ENCODE measurements at regions of chr4 and their contacts with region 1.

Region 1: DNA sequence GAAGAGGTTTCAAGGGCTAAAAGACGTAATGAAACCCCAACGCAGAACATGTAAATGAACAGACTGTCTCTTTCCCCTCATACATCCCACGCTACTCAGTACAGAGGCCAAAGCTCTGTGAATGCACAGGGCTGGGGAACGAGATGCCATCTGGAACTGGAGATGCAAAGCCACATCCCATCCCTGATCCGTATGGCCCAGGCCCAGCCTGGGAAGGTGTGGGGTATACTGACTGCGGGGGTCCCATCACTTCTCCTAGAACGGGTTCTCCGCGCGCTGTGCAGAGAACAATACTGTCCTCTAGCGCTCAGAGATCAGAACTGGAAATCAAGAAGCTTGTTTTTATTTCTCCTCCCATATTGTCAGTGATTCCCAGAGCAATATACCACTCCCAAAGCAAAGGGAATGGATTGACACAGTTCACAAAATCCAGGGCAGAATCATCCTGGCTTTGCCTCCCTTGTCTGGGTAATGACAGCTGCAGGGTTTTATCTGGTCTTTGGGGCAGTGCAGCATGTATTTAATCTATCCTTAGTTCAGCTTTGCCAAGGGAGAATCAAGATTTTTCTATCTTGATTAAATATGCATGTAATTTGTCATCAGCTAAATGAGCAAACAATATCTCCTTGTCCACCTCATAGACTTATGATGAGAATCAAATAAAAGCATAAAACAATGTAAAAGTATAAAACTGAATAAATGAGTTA is 47.3 kb upstream of the TLR3 start:
- DNase-seq: peak; percentile 44
- ATAC-seq: peak; percentile 55
- H3K4me3 ChIP-seq: no peak overlapping the region
- H3K27ac ChIP-seq: no peak overlapping the region
- H3K4me1 ChIP-seq: no peaks in the 10 kb centered on the region
- H3K27me3 ChIP-seq: no peaks in the 10 kb centered on the region
- CTCF ChIP-seq: peak; percentile 80

Region 2: DNA sequence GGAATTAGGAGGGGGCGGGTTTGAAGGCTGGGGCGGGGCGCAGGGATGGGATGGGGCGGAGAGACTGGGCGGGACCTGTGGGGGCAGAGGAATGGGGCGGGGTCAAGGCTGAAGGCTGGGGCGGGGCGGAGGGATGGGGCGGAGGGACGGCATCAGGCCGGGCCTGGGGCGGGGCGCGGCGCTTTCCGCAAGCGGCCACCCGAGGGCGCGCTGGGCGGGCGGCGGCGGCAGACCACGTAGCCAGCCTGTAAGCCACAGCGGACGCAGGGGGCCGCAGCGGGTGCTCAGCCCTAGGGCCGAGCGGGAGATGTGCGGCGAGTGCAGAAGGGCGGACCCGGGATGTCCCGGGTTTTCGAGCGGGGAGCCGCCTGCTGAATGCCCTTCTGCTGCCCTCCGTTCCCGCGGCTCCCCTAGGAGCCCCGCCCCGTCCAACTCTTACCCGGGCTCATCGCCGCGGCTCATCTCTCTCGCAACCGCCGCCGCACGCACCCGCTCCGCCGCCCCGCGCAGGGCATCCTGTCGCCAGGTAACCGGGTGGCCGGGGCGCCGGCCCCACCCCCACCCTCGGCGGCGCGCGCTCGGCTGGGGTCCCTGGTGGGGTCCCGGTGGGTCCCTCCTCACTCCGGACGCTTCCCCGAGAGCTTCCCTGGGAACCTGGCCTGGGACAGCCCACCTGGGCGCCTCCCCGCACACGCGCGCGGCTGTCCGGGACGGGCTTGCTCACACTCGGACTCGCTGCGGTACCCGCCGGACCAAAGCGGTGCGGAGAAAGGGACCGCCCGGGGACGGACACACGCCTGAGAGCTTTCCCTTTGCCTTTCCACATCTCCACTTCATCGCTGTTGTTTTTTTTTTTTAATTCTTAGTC is 550.1 kb before region 1 on chr4 and contains the start of gene CCDC110:
- CTCF ChIA-PET with region 1: no interaction called
- POLR2A ChIA-PET with region 1: no interaction called
- intact Hi-C with region 1: no loop called
- DNase-seq: peak; percentile 76
- ATAC-seq: peak; percentile 92
- H3K4me3 ChIP-seq: peak within 1 kb of the TSS; percentile 91
- H3K27ac ChIP-seq: no peak within 1 kb of the TSS
- H3K4me1 ChIP-seq: peaks cover 5% of the 10 kb centered on the region; the same call in 1 of the 2 replicates
- H3K27me3 ChIP-seq: no peaks in the 10 kb centered on the region
- CTCF ChIP-seq: peak; percentile 42; the same call in 1 of the 2 replicates
- total RNA-seq, gene CCDC110: 0.62 TPM in 1 of 2 replicates, not detected in the other

Region 3: DNA sequence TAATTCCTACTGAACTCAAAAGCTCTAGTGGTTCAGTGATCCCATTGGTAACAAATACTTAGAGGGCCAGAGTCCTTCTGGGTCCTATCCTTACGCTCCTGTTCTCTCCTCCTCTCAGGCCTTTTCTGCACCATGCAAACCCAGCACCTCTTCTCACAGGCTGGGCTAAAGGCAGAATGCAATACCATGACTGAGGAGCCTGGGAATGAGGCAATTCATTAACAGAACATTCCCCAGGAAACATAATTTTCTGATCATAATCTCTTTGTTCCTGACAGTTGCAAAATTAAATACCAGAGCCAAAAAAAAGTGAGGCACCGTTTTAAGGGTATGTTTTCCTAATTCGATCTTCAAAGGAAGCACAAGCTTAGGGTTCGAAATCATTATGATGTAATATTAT is 218.6 kb before region 1 on chr4:
- CTCF ChIA-PET with region 1: no interaction called
- POLR2A ChIA-PET with region 1: no interaction called
- intact Hi-C with region 1: no loop called
- DNase-seq: no peak
- ATAC-seq: no peak
- H3K4me3 ChIP-seq: no peak overlapping the region
- H3K27ac ChIP-seq: no peak overlapping the region
- H3K4me1 ChIP-seq: no peaks in the 10 kb centered on the region
- H3K27me3 ChIP-seq: no peaks in the 10 kb centered on the region
- CTCF ChIP-seq: no peak

Region 4: DNA sequence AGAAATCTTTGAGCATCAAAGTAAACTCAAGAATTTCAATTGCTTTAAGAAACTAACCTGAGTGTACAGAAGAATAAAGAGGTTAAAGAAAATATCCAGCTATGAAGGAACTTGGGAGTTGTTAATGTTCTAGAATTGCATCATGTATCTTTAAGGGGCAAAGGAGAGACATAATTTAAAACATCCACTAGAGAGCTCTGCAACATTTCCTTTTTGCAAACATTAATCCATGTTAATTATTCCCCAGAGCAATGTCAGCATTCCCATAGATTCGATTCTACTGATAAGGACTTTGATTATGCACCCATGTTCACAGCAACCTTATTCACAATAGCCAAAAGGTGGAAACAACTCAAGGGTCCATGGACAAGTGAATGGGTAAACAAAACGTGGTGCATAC is 129.4 kb before region 1 on chr4:
- CTCF ChIA-PET with region 1: interaction called, 3 read pairs
- POLR2A ChIA-PET with region 1: no interaction called
- intact Hi-C with region 1: loop called (anchors 1 kb)
- DNase-seq: no peak
- ATAC-seq: no peak; the same call in 1 of the 2 replicates
- H3K4me3 ChIP-seq: no peak overlapping the region
- H3K27ac ChIP-seq: no peak overlapping the region
- H3K4me1 ChIP-seq: peaks cover 11% of the 10 kb centered on the region
- H3K27me3 ChIP-seq: no peaks in the 10 kb centered on the region
- CTCF ChIP-seq: no peak

Region 5: GRCh38 chr4:185950891-185951290 is 70.7 kb before region 1 on chr4:
- CTCF ChIA-PET with region 1: no interaction called
- POLR2A ChIA-PET with region 1: no interaction called
- intact Hi-C with region 1: no loop called
- DNase-seq: no peak
- ATAC-seq: no peak
- H3K4me3 ChIP-seq: no peak overlapping the region
- H3K27ac ChIP-seq: no peak overlapping the region
- H3K4me1 ChIP-seq: no peaks in the 10 kb centered on the region
- H3K27me3 ChIP-seq: no peaks in the 10 kb centered on the region
- CTCF ChIP-seq: no peak

Measured in PC-3 (cell line).